Heart right ventricle (tissue), 16 donors: ENCODE measurements at regions of chr18 and their contacts with region 1.

Region 1: DNA sequence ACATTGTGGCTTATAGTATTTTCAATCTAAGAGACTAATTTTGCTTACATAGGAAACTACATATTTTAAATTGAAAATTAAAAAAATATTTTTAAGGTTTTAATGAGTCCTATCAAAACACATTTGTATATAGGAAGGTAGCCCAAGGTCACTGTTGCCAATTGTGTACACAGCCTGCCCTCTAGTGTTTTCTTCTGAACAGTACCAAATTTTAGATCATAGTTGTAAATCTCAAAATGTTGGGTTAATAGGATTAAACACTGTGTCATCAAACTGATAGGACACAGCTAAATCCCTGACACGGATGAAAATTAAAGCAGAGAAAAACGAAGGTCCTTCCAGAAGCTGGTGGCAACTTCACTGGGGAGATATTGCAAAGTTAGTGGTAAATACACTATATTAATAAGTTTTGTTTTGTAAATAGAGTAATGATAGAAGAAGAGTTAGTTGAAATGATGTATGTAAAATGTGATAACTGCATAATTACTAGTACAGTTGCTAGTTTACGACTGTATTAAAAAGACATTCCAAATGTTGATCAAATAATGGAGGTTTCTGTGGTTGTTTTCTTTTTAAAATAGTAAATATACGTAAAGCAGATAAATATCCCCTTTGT is 19.7 kb downstream of the CLUL1 start:
- DNase-seq: no peak
- ATAC-seq: peak in 7 of 8 donors; percentile 33 to 72 (median 68)
- H3K4me3 ChIP-seq: no peak overlapping the region
- H3K27ac ChIP-seq: no peak overlapping the region
- H3K4me1 ChIP-seq: peaks cover 0 to 17% (median 0%) of the 10 kb centered on the region in 9 donors
- H3K27me3 ChIP-seq: peaks cover 0 to 12% (median 8%) of the 10 kb centered on the region in 7 donors
- CTCF ChIP-seq: peak; percentile 40 to 89 (median 73)

Region 2: GRCh38 chr18:286515-287310 is 329.8 kb before region 1 on chr18:
- intact Hi-C with region 1: loop called in 9 of 10 experiments (anchors 2 to 5 kb)
- DNase-seq: no peak
- ATAC-seq: peak in 3 of 8 donors; percentile 55 to 65 (median 61)
- H3K4me3 ChIP-seq: no peak overlapping the region
- H3K27ac ChIP-seq: no peak overlapping the region
- H3K4me1 ChIP-seq: peaks cover 0 to 11% (median 0%) of the 10 kb centered on the region in 9 donors
- H3K27me3 ChIP-seq: peaks cover 0 to 8% (median 0%) of the 10 kb centered on the region in 7 donors
- CTCF ChIP-seq: peak; percentile 17 to 72 (median 57)

Region 3: DNA sequence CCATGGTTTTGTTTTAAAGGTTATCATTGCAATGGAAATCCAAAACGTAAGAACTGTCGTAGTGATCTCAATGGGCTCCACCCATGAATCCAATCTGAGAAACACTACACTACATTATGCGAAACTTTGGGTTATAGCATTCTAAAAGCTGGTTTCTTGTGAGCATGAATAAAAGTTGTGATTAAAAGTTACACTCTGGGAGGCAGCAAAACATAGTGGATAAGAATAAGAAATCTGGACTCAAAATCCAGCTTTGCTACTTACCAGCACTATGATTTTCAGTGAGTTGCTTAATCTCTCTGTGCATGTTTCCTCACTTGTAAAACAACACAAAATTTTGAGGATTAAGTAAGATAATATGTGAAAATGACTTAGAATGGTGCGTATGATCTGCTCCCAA is 323.0 kb before region 1 on chr18:
- intact Hi-C with region 1: loop called in 5 of 10 experiments (anchors 2 to 5 kb)
- DNase-seq: no peak
- ATAC-seq: peak in 2 of 8 donors; percentile 46 to 49
- H3K4me3 ChIP-seq: no peak overlapping the region
- H3K27ac ChIP-seq: no peak overlapping the region
- H3K4me1 ChIP-seq: peaks cover 0 to 4% (median 0%) of the 10 kb centered on the region in 9 donors
- H3K27me3 ChIP-seq: peaks cover 0 to 7% (median 0%) of the 10 kb centered on the region in 7 donors
- CTCF ChIP-seq: peak in 5 of 9 donors; percentile 11 to 37 (median 18)

Region 4: GRCh38 chr18:499551-500408 is 116.7 kb before region 1 on chr18:
- intact Hi-C with region 1: loop called in 1 of 10 experiments (anchors 10 kb)
- DNase-seq: no peak
- ATAC-seq: peak in 6 of 8 donors; percentile 21 to 42 (median 28)
- H3K4me3 ChIP-seq: peak overlapping the region; percentile 18 to 59 (median 55)
- H3K27ac ChIP-seq: peak overlapping the region in 5 of 10 donors; percentile 16 to 77 (median 58)
- H3K4me1 ChIP-seq: peaks cover 0 to 30% (median 16%) of the 10 kb centered on the region in 9 donors
- H3K27me3 ChIP-seq: peaks cover 0 to 67% (median 55%) of the 10 kb centered on the region in 7 donors
- CTCF ChIP-seq: peak in 5 of 9 donors; percentile 9 to 30 (median 18)